T-cell (primary cell): ENCODE measurements at regions of chr19 and their contacts with region 1.

Region 1: DNA sequence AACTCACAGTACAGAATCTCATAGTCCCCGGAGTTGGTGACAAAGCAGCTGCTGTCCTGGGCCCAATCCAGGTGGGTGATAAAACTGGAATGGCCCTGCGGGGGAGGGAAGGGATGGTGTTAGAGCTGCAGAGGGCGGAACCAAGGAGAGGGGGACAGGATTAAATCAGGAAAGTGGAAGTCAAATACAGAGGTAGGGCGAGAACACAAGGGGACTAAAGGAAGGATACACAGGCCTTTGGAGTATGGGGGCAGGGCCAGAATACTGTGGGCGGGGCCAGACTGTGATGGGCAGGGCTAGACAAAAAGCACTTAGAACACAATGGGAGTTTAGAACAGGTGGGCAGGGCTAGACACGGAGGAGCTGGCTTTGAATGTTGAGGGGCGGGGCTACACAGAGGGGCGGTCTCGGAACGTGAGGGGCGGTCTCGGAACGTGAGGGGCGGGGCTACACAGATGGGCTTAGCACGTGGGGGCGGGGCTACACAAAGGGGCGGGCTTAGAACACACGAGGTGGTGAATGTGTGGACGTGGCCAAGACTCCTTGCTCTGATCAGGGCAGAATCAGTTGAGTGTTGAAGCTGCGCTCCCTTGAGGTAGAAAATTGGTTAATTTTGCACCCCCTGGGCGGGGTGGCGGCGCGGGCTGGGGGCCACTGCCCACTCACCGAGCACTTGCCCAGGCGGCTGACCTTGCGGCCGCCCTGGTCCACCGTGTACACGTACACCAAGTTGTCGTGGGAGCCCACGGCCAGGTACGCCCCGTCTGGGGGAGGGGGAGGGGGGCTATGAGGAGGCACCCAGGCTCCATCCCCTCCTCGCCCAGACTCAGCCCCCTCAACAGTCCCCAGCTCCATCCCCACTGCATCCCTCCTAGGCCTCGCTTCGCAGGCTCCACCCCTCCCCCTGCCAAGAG is 14.0 kb upstream of the GPR4 start:
- DNase-seq: peak; percentile 25 to 83 (median 70)
- ATAC-seq: peak; percentile 77 to 96 (median 87)
- H3K4me3 ChIP-seq: no peak overlapping the region
- H3K4me3 Mint-ChIP-seq: no peak overlapping the region
- H3K27ac ChIP-seq: no peak overlapping the region
- H3K27ac Mint-ChIP-seq: peak overlapping the region in 1 of 2 donors; percentile 28
- H3K4me1 ChIP-seq: peaks cover 0 to 6% of the 10 kb centered on the region in 2 experiments
- H3K4me1 Mint-ChIP-seq: peaks cover 0 to 11% (median 8%) of the 10 kb centered on the region in 3 donors
- H3K27me3 ChIP-seq: no peaks in the 10 kb centered on the region
- H3K27me3 Mint-ChIP-seq: no peaks in the 10 kb centered on the region

Region 2: GRCh38 chr19:43923875-43924274 is 1692.2 kb before region 1 on chr19:
- CTCF ChIA-PET with region 1: interaction called in 1 of 2 experiments, 11 read pairs
- POLR2A ChIA-PET with region 1: no interaction called
- DNase-seq: no peak
- ATAC-seq: no peak
- H3K4me3 ChIP-seq: no peak overlapping the region
- H3K4me3 Mint-ChIP-seq: no peak overlapping the region
- H3K27ac ChIP-seq: no peak overlapping the region
- H3K27ac Mint-ChIP-seq: no peak overlapping the region
- H3K4me1 ChIP-seq: no peaks in the 10 kb centered on the region
- H3K4me1 Mint-ChIP-seq: peaks cover 0 to 3% (median 0%) of the 10 kb centered on the region in 3 donors
- H3K27me3 ChIP-seq: no peaks in the 10 kb centered on the region
- H3K27me3 Mint-ChIP-seq: no peaks in the 10 kb centered on the region

Region 3: DNA sequence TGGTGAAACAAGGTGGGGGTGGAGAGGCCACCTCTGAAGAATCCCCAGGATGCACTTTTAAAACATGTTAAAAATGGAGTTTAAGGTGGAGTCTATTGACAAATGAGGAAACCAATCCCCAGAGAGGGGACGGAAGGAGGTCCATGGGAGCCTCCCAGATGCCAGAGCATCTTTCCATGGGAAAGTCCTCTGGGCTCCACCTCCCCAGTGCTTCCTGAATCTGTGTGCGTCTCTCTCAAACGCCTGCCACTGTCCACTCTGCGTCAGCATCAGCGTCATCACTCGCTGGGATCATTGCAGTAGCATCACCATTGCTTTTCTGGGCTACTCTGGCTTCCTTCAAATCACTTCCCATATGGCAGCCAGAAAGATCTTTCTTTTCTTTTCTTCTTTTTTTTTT is 20.2 kb before region 1 on chr19:
- CTCF ChIA-PET with region 1: no interaction called
- POLR2A ChIA-PET with region 1: no interaction called
- DNase-seq: no peak
- ATAC-seq: no peak
- H3K4me3 ChIP-seq: no peak overlapping the region
- H3K4me3 Mint-ChIP-seq: no peak overlapping the region
- H3K27ac ChIP-seq: no peak overlapping the region
- H3K27ac Mint-ChIP-seq: no peak overlapping the region
- H3K4me1 ChIP-seq: peaks cover 0 to 16% of the 10 kb centered on the region in 2 experiments
- H3K4me1 Mint-ChIP-seq: peaks cover 20 to 39% (median 35%) of the 10 kb centered on the region in 3 donors
- H3K27me3 ChIP-seq: peaks cover 3 to 79% of the 10 kb centered on the region in 2 experiments
- H3K27me3 Mint-ChIP-seq: peaks cover 61 to 73% of the 10 kb centered on the region in 2 donors

Region 4: DNA sequence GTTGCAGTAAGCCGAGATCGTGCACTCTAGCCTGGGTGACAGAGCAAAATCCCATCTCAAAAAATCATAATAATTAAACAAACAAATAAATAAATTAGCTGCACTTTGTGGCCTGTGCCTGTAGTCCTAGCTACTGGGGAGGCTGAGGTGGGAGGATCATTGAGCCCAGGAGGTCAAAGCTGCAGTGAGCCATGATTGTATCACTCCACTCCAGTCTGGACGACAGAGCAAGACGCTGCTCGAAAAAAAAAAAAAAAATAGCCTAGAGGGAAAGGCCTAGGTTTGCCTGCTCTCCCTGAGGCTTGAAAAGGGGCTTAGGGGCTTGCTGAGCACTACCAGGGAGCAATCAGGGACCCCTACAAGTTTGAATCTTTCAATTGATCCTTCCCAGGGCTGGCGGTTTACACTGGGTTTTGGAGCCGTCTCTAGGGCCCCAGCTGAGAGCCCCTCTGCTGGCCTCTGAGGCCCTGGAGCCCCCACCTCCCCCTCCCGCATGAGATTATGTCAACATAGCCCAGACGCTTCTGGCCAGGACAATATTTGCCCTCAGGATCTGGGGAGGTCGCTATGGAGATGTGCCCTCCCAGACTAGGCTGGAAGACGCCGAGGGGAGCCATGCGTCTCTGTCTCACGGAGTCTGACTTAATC is 41.6 kb after region 1 on chr19:
- CTCF ChIA-PET with region 1: no interaction called
- POLR2A ChIA-PET with region 1: no interaction called
- DNase-seq: no peak
- ATAC-seq: no peak
- H3K4me3 ChIP-seq: no peak overlapping the region
- H3K4me3 Mint-ChIP-seq: no peak overlapping the region
- H3K27ac ChIP-seq: no peak overlapping the region
- H3K27ac Mint-ChIP-seq: no peak overlapping the region
- H3K4me1 ChIP-seq: no peaks in the 10 kb centered on the region
- H3K4me1 Mint-ChIP-seq: no peaks in the 10 kb centered on the region
- H3K27me3 ChIP-seq: peaks cover 2 to 19% of the 10 kb centered on the region in 2 experiments
- H3K27me3 Mint-ChIP-seq: peaks cover 0 to 5% of the 10 kb centered on the region in 2 donors